Psoas muscle (tissue), 8 donors: ENCODE measurements at regions of chr11 and their contacts with region 1.

Region 1: GRCh38 chr11:17276236-17277023 is at the start of gene NUCB2:
- DNase-seq: peak; percentile 97 to 98
- ATAC-seq: peak; percentile 99
- H3K4me3 ChIP-seq: peak within 1 kb of the TSS; percentile 97
- H3K27ac ChIP-seq: peak within 1 kb of the TSS; percentile 89
- H3K4me1 ChIP-seq: no peaks in the 10 kb centered on the region
- H3K27me3 ChIP-seq: no peaks in the 10 kb centered on the region
- CTCF ChIP-seq: no peak
- total RNA-seq, gene NUCB2: 20.4 to 42.3 (median 26.8) TPM

Region 2: DNA sequence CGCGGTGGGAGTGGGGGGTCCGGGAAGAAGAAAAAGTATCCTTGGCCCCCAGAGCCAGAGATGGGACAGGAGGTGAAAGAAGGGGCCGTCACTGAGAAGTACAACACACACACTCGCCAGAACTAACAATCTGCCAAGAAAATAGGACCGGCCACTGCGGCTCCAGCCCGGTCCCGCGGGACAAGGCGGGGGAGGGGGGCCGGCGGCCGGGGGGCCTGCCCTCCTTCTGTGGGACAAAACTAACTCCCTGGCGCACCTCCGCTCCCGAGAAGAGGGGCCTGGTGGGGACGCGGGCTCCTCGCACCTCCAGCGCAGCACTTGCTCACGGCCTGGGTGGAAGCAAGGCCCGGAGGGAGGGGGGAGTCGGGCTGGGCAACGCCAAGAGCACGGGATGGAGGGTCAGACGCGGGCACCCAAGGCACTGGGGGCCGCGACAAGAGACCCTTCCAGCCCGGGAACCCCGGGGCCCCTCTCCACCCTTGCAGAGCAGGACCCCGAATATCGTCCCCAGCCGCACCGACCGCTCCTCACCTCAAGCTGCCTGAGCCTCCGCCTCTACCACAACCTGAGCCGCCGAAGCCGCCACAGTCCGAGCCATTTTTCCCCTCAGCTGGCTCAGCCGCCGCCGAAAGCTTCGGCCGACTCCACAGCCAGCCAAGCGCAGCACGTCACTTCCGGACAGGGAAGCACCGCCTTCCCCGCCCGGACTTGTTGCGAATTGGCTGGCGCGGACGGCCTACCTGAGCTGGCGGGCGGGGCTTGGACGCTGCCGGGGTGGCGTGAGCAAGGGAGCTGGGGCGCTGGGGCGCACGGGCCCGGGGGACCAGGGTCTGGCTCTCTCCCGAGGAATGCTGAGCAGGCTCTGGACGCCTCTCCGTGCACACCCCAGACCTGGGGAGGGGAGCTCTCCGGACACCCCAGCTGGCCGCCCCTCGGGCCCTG is 68.8 kb before region 1 on chr11 and contains the start of gene PIK3C2A:
- intact Hi-C with region 1: loop called in 1 of 2 experiments (anchors 5 kb)
- DNase-seq: peak; percentile 96 to 97
- ATAC-seq: peak; percentile 98 to 99 (median 99)
- H3K4me3 ChIP-seq: peak within 1 kb of the TSS; percentile 78
- H3K27ac ChIP-seq: peak within 1 kb of the TSS; percentile 88
- H3K4me1 ChIP-seq: peaks cover 7% of the 10 kb centered on the region
- H3K27me3 ChIP-seq: no peaks in the 10 kb centered on the region
- CTCF ChIP-seq: no peak
- total RNA-seq, gene PIK3C2A: 14.0 to 16.6 (median 16.4) TPM